ENCODE measurements at regions of chr12 and their contacts with region 1.

Region 1: DNA sequence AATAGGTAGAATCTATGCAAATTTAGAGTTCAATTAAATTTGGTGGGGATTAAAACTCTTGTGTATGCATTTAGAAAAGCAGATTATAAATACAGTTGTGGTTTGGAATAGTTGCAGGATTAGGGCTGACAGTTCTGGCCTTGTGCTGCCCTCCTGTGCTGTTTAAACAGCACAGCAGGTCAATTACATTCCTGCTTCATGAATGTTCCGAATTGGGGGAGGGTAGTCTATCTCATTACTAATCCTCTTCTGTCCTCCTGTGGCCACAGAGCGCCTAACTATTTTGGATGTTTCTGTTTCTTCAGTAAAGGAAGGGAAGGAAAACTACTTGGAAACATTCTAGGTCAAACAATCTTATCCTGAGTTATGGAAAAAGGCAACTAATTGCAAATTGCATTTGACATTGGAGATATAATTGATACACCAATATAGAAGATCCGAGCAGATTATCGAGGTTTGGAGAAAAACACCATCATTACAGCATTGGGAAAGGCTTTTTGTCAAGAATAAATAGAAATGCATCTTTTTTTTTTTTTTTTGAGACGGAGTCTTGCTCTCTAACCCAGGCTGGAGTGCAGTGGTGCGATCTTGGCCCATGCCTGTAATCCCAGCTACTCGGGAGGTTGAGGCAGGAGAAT is 8.7 kb upstream of the GPR19 start:
- DNase-seq: peak in 7 of 9 donors; percentile 44 to 71 (median 60)
- ATAC-seq: peak; percentile 92
- H3K4me3 ChIP-seq: no peak overlapping the region
- H3K4me3 Mint-ChIP-seq: peak overlapping the region in 9 of 10 donors; percentile 16 to 76 (median 58)
- H3K27ac ChIP-seq: no peak overlapping the region
- H3K27ac Mint-ChIP-seq: peak overlapping the region; percentile 15 to 80 (median 64)
- H3K4me1 ChIP-seq: peaks cover 18 to 37% of the 10 kb centered on the region in 2 donors
- H3K4me1 Mint-ChIP-seq: peaks cover 17 to 35% (median 24%) of the 10 kb centered on the region in 7 donors
- H3K27me3 ChIP-seq: no peaks in the 10 kb centered on the region
- H3K27me3 Mint-ChIP-seq: no peaks in the 10 kb centered on the region

Region 2: DNA sequence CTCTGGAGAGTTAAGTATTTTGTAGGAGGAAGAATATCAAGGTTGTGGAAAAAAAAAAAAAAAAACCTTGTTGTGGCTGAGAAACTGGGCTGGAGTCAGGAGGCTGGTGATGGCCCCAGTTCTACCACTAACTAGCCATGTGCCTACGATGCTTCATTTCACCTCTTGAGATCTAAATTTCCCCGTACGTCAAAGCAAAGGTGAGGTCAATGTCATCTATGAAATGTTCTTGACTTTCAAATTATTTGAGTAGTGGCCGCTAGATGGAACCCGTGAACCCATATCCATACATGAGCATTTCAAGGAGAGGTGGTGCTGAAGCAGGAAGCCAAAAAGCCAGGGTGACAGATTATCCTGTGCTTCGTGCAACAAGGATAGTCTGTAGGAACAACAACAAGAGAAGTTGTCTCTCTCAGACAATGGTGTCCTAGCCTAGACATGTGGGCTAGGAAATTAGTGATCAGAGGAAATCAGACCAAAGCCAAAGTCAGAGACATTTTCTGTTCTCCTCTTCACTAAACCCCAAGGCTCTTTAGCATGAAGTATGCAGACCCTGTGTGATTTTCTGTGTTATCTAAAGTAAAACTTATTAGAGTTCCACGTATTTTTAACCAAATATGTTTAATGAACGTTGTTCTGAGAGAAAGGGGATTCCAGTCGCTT is 1150.7 kb before region 1 on chr12:
- CTCF ChIA-PET with region 1: no interaction called
- POLR2A ChIA-PET with region 1: no interaction called
- intact Hi-C with region 1: loop called in 1 of 2 experiments (anchors 10 kb)
- DNase-seq: peak in 7 of 9 donors; percentile 41 to 66 (median 58)
- ATAC-seq: peak; percentile 81
- H3K4me3 ChIP-seq: no peak overlapping the region
- H3K4me3 Mint-ChIP-seq: peak overlapping the region in 8 of 10 donors; percentile 12 to 71 (median 36)
- H3K27ac ChIP-seq: no peak overlapping the region
- H3K27ac Mint-ChIP-seq: peak overlapping the region in 8 of 9 donors; percentile 38 to 94 (median 58)
- H3K4me1 ChIP-seq: peaks cover 0 to 15% of the 10 kb centered on the region in 2 donors
- H3K4me1 Mint-ChIP-seq: peaks cover 11 to 47% (median 32%) of the 10 kb centered on the region in 7 donors
- H3K27me3 ChIP-seq: no peaks in the 10 kb centered on the region
- H3K27me3 Mint-ChIP-seq: peaks cover 0 to 26% (median 0%) of the 10 kb centered on the region in 5 donors

Region 3: DNA sequence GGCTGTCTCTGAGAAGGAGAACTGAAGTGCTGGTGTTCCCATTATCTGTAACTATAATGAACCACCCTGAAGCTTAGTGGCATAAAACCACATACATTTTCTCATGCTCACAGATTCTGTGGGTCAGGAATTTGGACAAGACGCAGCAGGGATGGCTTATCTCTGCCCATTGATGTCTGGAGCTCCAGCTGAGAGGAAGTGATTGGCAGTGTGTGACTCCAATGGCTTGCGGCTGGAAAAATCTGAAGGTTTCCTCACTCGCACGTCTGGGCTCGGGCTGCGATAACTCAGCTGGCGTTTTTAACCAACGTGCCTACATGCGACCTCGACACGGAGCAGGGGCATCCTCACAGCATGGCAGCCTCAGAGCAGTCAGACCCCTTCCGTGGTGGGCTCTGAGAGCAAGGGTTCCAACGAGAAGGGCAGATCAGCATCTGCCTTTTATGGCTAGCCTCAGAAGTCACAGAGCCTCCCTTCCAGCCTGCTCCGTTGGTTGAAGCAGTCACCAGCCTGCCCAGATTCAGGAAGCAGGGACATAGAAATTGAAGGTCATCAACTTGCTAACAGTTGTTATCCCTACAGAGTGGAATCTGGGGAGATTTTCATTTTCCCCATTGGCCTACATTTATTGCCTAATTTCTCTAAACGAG is 777.3 kb before region 1 on chr12:
- CTCF ChIA-PET with region 1: no interaction called
- POLR2A ChIA-PET with region 1: no interaction called
- intact Hi-C with region 1: no loop called
- DNase-seq: no peak
- ATAC-seq: no peak
- H3K4me3 ChIP-seq: no peak overlapping the region
- H3K4me3 Mint-ChIP-seq: no peak overlapping the region
- H3K27ac ChIP-seq: no peak overlapping the region
- H3K27ac Mint-ChIP-seq: no peak overlapping the region
- H3K4me1 ChIP-seq: no peaks in the 10 kb centered on the region
- H3K4me1 Mint-ChIP-seq: peaks cover 0 to 7% (median 0%) of the 10 kb centered on the region in 7 donors
- H3K27me3 ChIP-seq: no peaks in the 10 kb centered on the region
- H3K27me3 Mint-ChIP-seq: peaks cover 0 to 2% (median 0%) of the 10 kb centered on the region in 5 donors

Region 4: GRCh38 chr12:12620730-12621315 is 83.9 kb before region 1 on chr12:
- CTCF ChIA-PET with region 1: no interaction called
- POLR2A ChIA-PET with region 1: no interaction called
- intact Hi-C with region 1: no loop called
- DNase-seq: no peak
- ATAC-seq: no peak
- H3K4me3 ChIP-seq: no peak overlapping the region
- H3K4me3 Mint-ChIP-seq: peak overlapping the region in 7 of 10 donors; percentile 1 to 76 (median 27)
- H3K27ac ChIP-seq: peak overlapping the region; percentile 6
- H3K27ac Mint-ChIP-seq: peak overlapping the region in 8 of 9 donors; percentile 70 to 95 (median 86)
- H3K4me1 ChIP-seq: peaks cover 30 to 54% of the 10 kb centered on the region in 2 donors
- H3K4me1 Mint-ChIP-seq: peaks cover 44 to 91% (median 83%) of the 10 kb centered on the region in 7 donors
- H3K27me3 ChIP-seq: no peaks in the 10 kb centered on the region
- H3K27me3 Mint-ChIP-seq: no peaks in the 10 kb centered on the region

Region 5: GRCh38 chr12:12645485-12645884 is 59.2 kb before region 1 on chr12:
- CTCF ChIA-PET with region 1: interaction called, 13 read pairs
- POLR2A ChIA-PET with region 1: interaction called, 4 read pairs
- intact Hi-C with region 1: loop called (anchors 1 to 5 kb)
- DNase-seq: peak in 8 of 9 donors; percentile 24 to 76 (median 62)
- ATAC-seq: peak; percentile 80
- H3K4me3 ChIP-seq: no peak overlapping the region
- H3K4me3 Mint-ChIP-seq: no peak overlapping the region
- H3K27ac ChIP-seq: no peak overlapping the region
- H3K27ac Mint-ChIP-seq: peak overlapping the region in 3 of 9 donors; percentile 42 to 79 (median 67)
- H3K4me1 ChIP-seq: no peaks in the 10 kb centered on the region
- H3K4me1 Mint-ChIP-seq: peaks cover 0 to 11% (median 3%) of the 10 kb centered on the region in 7 donors
- H3K27me3 ChIP-seq: no peaks in the 10 kb centered on the region
- H3K27me3 Mint-ChIP-seq: no peaks in the 10 kb centered on the region

Region 6: GRCh38 chr12:12661086-12661485 is 43.6 kb before region 1 on chr12:
- CTCF ChIA-PET with region 1: interaction called, 6 read pairs
- POLR2A ChIA-PET with region 1: no interaction called
- intact Hi-C with region 1: loop called in 1 of 2 experiments (anchors 2 kb)
- DNase-seq: no peak
- ATAC-seq: no peak
- H3K4me3 ChIP-seq: no peak overlapping the region
- H3K4me3 Mint-ChIP-seq: no peak overlapping the region
- H3K27ac ChIP-seq: no peak overlapping the region
- H3K27ac Mint-ChIP-seq: peak overlapping the region in 1 of 9 donors; percentile 82
- H3K4me1 ChIP-seq: no peaks in the 10 kb centered on the region
- H3K4me1 Mint-ChIP-seq: peaks cover 0 to 3% (median under 1%) of the 10 kb centered on the region in 7 donors
- H3K27me3 ChIP-seq: no peaks in the 10 kb centered on the region
- H3K27me3 Mint-ChIP-seq: no peaks in the 10 kb centered on the region

Region 7: GRCh38 chr12:12736759-12737676 is 32.3 kb after region 1 on chr12:
- CTCF ChIA-PET with region 1: interaction called, 18 read pairs
- POLR2A ChIA-PET with region 1: interaction called, 10 read pairs
- intact Hi-C with region 1: loop called (anchors 1 to 5 kb)
- DNase-seq: peak in 7 of 9 donors; percentile 32 to 59 (median 39)
- ATAC-seq: peak; percentile 93
- H3K4me3 ChIP-seq: peak overlapping the region; percentile 28
- H3K4me3 Mint-ChIP-seq: peak overlapping the region; percentile 53 to 82 (median 68)
- H3K27ac ChIP-seq: peak overlapping the region; percentile 54
- H3K27ac Mint-ChIP-seq: peak overlapping the region; percentile 75 to 93 (median 85)
- H3K4me1 ChIP-seq: peaks cover 9 to 33% of the 10 kb centered on the region in 2 donors
- H3K4me1 Mint-ChIP-seq: peaks cover 21 to 65% (median 35%) of the 10 kb centered on the region in 7 donors
- H3K27me3 ChIP-seq: no peaks in the 10 kb centered on the region
- H3K27me3 Mint-ChIP-seq: no peaks in the 10 kb centered on the region